ENCODE measurements at regions of chr7 and their contacts with region 1.

Region 1: DNA sequence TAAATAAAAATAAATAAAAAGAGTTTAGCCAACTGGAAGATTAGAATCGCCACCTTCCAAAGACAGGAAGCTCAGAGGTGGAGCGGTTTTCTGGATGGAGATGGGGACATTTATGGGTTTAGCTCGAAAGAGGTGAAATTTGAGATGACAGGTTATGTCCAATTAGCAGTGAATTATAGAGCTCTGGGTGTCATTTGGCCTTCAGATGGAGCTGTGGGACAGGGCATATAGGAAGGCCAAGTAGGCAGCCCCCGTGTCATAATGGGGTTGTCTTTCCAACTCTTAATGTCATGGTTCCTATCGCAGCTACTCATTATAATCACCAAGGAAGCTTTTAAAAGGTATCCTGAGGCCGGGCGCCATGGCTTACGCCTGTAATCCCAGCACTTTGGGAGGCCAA is 21.0 kb upstream of the EEPD1 start:
- DNase-seq: no peak

Region 2: DNA sequence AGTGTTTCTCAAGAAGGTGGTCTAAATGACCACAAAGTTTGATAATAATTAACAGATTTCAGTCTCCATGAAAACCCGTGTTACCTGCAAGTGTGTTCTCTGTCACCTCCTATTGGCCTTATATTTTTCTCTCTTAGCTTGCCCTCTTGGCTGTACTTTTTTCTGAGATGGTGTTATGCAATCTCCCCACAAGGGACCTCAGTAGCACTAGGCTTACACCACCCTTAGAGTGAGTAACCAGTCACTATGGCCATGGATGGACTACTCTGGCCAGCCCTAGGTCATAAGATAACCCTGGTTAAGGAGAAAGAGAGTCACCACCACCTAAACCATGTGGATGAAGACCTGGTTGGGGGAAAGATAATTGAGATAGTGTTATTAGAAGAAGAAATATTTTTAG is 1397.2 kb before region 1 on chr7:
- intact Hi-C with region 1: loop called in 1 of 2 experiments (anchors 5 kb)
- DNase-seq: no peak

Region 3: DNA sequence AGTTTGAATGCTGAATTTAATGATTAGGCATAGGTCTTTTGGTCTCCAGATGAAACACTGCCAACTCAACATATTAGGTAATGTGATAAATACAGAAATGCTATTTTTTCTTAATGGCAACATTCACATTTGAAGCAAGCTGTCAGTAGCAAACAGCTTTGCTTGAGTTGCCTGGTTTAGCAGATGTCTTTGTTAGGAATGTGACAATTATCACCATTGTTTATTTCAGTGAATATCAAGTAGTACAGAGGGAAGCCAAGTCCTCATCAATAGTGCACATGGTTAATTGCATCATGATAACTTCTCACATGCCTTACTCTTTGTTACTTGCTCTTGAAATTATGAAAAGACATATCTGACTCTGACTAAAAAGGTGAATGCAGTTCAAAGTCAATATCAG is 354.9 kb before region 1 on chr7:
- intact Hi-C with region 1: no loop called
- DNase-seq: no peak